ENCODE measurements at regions of chr12 and their contacts with region 1.

Region 1: GRCh38 chr12:132414634-132415326 is 75.2 kb upstream of the FBRSL1 start:
- DNase-seq: peak; percentile 88
- ATAC-seq: peak; percentile 95
- H3K4me3 ChIP-seq: no peak overlapping the region
- H3K27ac ChIP-seq: no peak overlapping the region
- H3K4me1 ChIP-seq: no peaks in the 10 kb centered on the region
- H3K27me3 ChIP-seq: peaks cover 20% of the 10 kb centered on the region
- CTCF ChIP-seq: peak; percentile 93

Region 2: DNA sequence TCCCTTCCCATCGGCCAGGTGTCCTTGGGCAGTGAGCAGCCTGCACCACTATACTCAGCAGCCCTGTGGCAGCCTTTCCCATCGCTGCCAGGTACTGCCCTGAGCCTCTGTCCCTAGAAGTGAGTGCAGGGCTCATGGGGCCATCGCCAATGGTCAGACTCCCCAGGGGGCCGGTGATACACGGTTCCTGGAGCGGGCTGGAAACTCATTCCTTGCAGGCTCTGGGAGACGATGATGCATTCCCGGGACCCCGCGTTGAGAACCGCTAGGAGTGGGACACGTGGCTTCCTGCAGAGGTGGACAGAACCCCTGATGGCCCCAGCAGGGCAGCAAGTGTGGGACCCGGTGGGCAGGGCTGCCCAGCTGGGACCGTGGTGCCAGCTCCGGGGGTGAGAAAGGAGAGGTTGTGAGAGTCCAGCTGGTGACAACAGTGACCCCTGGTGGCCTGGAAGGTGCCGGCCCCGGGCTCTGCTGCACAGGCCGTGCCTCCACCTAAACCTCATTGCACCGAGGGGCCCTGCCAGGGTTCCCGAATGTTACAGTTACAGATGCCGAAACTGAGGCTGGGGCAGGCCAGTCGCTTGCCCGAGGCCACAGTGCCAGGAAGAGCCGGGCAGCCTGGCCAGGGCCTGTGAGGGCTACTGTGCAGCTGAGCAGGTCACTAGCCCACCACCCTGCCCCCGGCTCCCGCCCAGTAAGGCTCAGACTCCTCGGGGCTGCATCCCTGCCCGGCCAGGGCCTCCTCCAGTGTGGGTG is 109.0 kb after region 1 on chr12:
- intact Hi-C with region 1: loop called (anchors 5 kb)
- DNase-seq: peak; percentile 83
- ATAC-seq: peak; percentile 71
- H3K4me3 ChIP-seq: no peak overlapping the region
- H3K27ac ChIP-seq: no peak overlapping the region
- H3K4me1 ChIP-seq: no peaks in the 10 kb centered on the region
- H3K27me3 ChIP-seq: no peaks in the 10 kb centered on the region
- CTCF ChIP-seq: peak; percentile 81

Region 3: GRCh38 chr12:132798836-132799235 is 384.1 kb after region 1 on chr12:
- intact Hi-C with region 1: no loop called
- DNase-seq: no peak
- ATAC-seq: no peak
- H3K4me3 ChIP-seq: no peak overlapping the region
- H3K27ac ChIP-seq: no peak overlapping the region
- H3K4me1 ChIP-seq: no peaks in the 10 kb centered on the region
- H3K27me3 ChIP-seq: no peaks in the 10 kb centered on the region
- CTCF ChIP-seq: no peak